ENCODE measurements at regions of chr1 and their contacts with region 1.

Region 1: DNA sequence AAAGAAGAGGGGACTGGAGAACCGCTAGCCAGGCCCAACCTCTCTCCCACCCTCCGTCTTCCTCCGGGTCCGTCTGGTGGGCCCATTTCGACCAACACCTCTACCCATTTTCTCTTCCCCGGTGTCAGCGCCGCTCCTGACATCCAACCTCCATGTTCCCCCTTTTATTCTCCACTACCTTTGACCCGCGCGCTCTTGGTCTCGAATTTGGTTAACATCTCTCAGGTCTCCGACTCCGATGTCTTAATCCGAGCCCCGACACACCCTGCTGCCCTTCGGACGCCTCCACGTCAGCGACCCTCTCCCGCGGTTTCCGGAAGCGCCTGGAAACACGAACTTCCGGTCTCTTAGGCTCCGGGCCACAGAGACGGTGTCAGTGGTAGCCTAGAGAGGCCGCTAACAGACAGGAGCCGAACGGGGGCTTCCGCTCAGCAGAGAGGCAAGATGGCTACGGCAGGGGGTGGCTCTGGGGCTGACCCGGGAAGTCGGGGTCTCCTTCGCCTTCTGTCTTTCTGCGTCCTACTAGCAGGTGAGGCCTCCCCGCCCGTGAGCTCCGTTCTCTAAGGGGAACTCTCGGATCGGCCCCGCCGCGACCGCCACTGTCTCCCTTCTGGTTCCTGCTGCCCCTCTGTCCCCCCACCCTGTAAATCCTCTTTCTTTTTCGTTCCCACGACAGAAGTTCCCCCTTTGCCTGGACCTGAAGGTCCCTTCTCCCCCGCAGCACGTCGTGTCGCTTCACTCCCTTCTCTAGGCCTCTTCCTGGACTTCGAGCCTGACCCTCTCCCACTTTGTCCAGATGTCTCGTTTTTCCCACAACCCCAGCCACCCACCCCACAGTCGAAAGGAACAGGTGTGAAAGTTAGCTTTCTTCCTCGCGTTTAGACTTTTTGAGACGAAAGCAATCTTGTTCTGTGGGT is at the starts of genes COPA and NCSTN:
- DNase-seq: peak; percentile 79 to 96 (median 84)
- ATAC-seq: peak; percentile 98
- H3K4me3 ChIP-seq: peak within 1 kb of the TSS; percentile 96
- H3K4me3 Mint-ChIP-seq: peak within 1 kb of the TSS; percentile 100
- H3K27ac ChIP-seq: peak within 1 kb of the TSS; percentile 88 to 94
- H3K27ac Mint-ChIP-seq: peak within 1 kb of the TSS; percentile 97
- H3K4me1 ChIP-seq: peaks cover 18% of the 10 kb centered on the region
- H3K4me1 Mint-ChIP-seq: peaks cover 69% of the 10 kb centered on the region
- H3K27me3 ChIP-seq: no peaks in the 10 kb centered on the region
- H3K27me3 Mint-ChIP-seq: no peaks in the 10 kb centered on the region
- CTCF ChIP-seq: no peak
- total RNA-seq, gene COPA: 95.0 to 107 TPM
- total RNA-seq, gene NCSTN: 54.9 to 56.6 TPM

Region 2: GRCh38 chr1:160031365-160032164 is 311.6 kb before region 1 on chr1 and contains the start of gene PIGM:
- CTCF ChIA-PET with region 1: no interaction called
- POLR2A ChIA-PET with region 1: no interaction called
- intact Hi-C with region 1: loop called in 1 of 2 experiments (anchors 2 kb)
- DNase-seq: peak; percentile 82 to 98 (median 92)
- ATAC-seq: peak; percentile 98
- H3K4me3 ChIP-seq: peak within 1 kb of the TSS; percentile 89
- H3K4me3 Mint-ChIP-seq: peak within 1 kb of the TSS; percentile 98
- H3K27ac ChIP-seq: peak within 1 kb of the TSS; percentile 52 to 67
- H3K27ac Mint-ChIP-seq: peak within 1 kb of the TSS; percentile 94
- H3K4me1 ChIP-seq: peaks cover 24% of the 10 kb centered on the region
- H3K4me1 Mint-ChIP-seq: peaks cover 50% of the 10 kb centered on the region
- H3K27me3 ChIP-seq: no peaks in the 10 kb centered on the region
- H3K27me3 Mint-ChIP-seq: no peaks in the 10 kb centered on the region
- CTCF ChIP-seq: no peak
- total RNA-seq, gene PIGM: 2.1 to 2.2 TPM

Region 3: GRCh38 chr1:160428655-160429054 is 85.4 kb after region 1 on chr1:
- CTCF ChIA-PET with region 1: no interaction called
- POLR2A ChIA-PET with region 1: no interaction called
- intact Hi-C with region 1: no loop called
- DNase-seq: peak in 10 of 14 experiments; percentile 15 to 82 (median 42)
- ATAC-seq: peak; percentile 76
- H3K4me3 ChIP-seq: no peak overlapping the region
- H3K4me3 Mint-ChIP-seq: peak overlapping the region; percentile 72
- H3K27ac ChIP-seq: peak overlapping the region; percentile 47 to 74
- H3K27ac Mint-ChIP-seq: peak overlapping the region; percentile 88
- H3K4me1 ChIP-seq: peaks cover 52% of the 10 kb centered on the region
- H3K4me1 Mint-ChIP-seq: peaks cover 63% of the 10 kb centered on the region
- H3K27me3 ChIP-seq: no peaks in the 10 kb centered on the region
- H3K27me3 Mint-ChIP-seq: no peaks in the 10 kb centered on the region
- CTCF ChIP-seq: peak; percentile 86

Region 4: DNA sequence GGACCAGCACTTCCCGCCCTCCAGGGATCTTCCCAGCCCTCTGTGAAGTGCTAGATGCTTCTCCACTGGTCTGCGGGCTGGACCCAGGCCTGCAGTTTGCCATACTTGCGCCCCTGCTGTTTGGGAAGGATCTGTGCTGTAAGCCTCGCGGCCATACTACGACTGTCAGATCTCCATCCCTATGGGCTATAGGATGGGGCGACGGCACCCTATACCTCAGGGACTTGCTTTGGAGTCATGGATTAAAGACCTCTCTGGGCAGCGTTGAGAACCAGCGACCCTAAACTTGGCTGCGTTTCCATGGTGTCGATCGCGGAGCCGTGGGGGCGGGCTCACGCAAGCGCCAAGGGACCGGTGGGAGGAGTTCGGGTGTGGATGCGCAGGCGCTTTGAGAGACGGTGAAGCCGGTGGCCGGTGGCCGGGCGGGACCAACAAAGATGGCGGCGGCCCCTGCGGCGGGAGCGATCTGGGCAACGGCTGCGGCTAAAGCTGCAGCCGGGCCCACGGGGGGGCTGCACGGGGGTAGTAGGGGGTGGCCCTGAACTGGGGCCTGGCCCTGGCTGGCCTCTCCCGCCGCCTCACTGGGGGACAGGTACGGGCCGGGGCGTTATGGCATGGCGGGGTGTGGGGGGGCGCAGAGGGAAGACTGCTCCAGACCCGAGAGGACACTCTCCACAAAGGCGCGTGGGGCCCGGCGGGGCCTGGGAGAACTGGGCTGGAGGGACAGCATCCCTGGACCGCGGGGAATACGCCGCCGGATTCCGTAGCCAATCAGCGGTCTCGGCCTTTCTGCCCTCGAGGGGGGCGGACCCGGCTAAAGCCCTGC is 816.1 kb after region 1 on chr1 and contains the start of gene USP21:
- CTCF ChIA-PET with region 1: no interaction called
- POLR2A ChIA-PET with region 1: no interaction called
- intact Hi-C with region 1: loop called in 1 of 2 experiments (anchors 10 kb)
- DNase-seq: peak; percentile 89 to 96 (median 90)
- ATAC-seq: peak; percentile 97
- H3K4me3 ChIP-seq: peak within 1 kb of the TSS; percentile 98
- H3K4me3 Mint-ChIP-seq: peak within 1 kb of the TSS; percentile 93
- H3K27ac ChIP-seq: peak within 1 kb of the TSS; percentile 70 to 91
- H3K27ac Mint-ChIP-seq: peak within 1 kb of the TSS; percentile 86
- H3K4me1 ChIP-seq: peaks cover 44% of the 10 kb centered on the region
- H3K4me1 Mint-ChIP-seq: peaks cover 80% of the 10 kb centered on the region
- H3K27me3 ChIP-seq: no peaks in the 10 kb centered on the region
- H3K27me3 Mint-ChIP-seq: no peaks in the 10 kb centered on the region
- CTCF ChIP-seq: no peak
- total RNA-seq, gene USP21: 44.4 to 45.6 TPM